Activated CD4-positive, alpha-beta T cell treated with anti-CD3 and anti-CD28 coated beads, Interleukin-2, amount 10 ng/mL, durations not matched to agents 24 days and 14 days (primary cell): ENCODE measurements at regions of chr14 and their contacts with region 1.

Region 1: DNA sequence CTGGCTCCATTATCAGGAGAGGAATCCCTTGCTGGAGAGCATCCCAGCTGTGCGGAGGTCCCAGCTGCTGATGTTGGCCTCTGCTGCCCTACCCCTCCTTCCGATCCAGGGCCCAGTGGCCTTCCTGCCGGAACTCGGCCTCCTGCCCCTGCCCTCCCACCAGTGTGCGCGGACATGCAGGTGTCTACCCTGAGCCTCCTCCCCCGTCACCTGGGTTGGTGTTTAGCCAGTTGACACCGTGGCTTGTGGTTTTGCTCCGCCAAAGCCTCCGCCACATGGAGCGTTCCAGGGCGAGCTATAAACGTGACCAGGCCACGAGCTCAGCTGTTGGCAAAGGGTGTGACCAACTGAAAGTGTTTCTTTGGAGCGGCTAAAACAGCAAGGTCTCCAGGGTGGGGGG is 1104.3 kb downstream of the BCL11B start:
- DNase-seq: peak; percentile 79
- H3K4me3 Mint-ChIP-seq: peak overlapping the region; percentile 46
- H3K27ac Mint-ChIP-seq: peak overlapping the region; percentile 77
- H3K4me1 Mint-ChIP-seq: peaks cover 54% of the 10 kb centered on the region
- H3K27me3 Mint-ChIP-seq: no peaks in the 10 kb centered on the region

Region 2: DNA sequence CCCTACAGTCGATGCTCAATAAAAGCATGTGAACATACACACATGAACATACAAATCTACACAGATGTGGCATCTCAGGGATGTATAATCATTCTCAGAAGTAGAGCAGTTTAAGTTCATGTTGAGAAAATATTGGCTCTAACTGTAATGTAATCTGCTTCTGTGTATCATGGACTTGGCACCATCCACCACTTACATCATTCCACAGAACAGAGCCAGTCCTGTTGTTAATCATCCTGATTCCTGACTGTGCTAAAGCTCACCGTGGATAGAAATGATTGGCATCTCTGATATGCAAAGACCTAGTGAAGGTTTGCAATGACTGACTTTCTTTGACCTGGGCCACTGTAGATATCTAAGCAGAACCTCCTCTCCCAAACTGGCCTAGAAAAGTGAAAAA is 37.0 kb before region 1 on chr14:
- intact Hi-C with region 1: no loop called
- DNase-seq: no peak
- H3K4me3 Mint-ChIP-seq: no peak overlapping the region
- H3K27ac Mint-ChIP-seq: no peak overlapping the region
- H3K4me1 Mint-ChIP-seq: peaks cover 15% of the 10 kb centered on the region
- H3K27me3 Mint-ChIP-seq: no peaks in the 10 kb centered on the region

Region 3: GRCh38 chr14:98189062-98189461 is 21.4 kb after region 1 on chr14:
- intact Hi-C with region 1: loop called (anchors 1 kb)
- DNase-seq: peak; percentile 86
- H3K4me3 Mint-ChIP-seq: peak overlapping the region; percentile 76
- H3K27ac Mint-ChIP-seq: peak overlapping the region; percentile 97
- H3K4me1 Mint-ChIP-seq: peaks cover 91% of the 10 kb centered on the region
- H3K27me3 Mint-ChIP-seq: no peaks in the 10 kb centered on the region